Right ventricle myocardium inferior (tissue), 1 donor: ENCODE measurements at regions of chr17 and their contacts with region 1.

Region 1: GRCh38 chr17:78970834-78971773 is 8.6 kb downstream of the LGALS3BP start:
- DNase-seq: peak; percentile 88
- ATAC-seq: peak; percentile 45

Region 2: GRCh38 chr17:78723001-78723796 is 247.9 kb before region 1 on chr17:
- intact Hi-C with region 1: loop called (anchors 10 kb)
- DNase-seq: peak; percentile 71
- ATAC-seq: peak; percentile 65

Region 3: DNA sequence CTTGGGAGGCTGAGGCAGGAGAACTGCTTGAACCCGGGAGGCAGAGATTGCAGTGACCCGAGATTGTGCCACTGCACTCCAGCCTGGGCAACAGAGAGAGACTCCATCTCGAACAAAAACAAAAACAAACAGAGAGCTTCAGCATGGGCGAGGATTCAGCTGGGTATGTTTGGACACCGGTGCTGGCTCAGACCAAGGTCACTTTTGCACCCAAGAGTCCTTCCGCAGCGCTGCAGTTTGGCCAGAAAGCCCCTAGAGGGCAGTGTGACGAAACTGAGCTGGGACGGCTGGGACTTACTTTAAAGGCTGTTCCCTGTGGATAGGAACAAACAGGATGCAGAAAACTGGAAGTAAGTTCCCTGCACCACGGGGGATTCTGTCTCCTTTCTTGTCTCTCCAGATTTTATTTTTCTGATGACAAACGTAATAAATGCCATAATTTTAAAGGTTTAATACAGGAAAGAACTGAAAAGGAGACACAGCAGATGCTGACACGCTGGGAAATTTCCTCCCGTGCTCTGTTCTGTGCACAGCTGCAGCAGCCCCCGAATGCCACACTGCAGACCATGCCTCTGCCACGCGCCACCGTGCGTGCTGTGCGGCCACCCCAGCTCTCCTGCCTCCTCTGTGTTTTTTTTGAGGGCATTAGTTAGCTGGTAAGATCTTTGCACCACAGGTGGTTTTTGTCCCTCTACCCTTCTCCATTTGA is 105.3 kb before region 1 on chr17:
- intact Hi-C with region 1: loop called (anchors 1 kb)
- DNase-seq: peak; percentile 85
- ATAC-seq: peak; percentile 74

Region 4: GRCh38 chr17:79042421-79043190 is 71.5 kb after region 1 on chr17:
- intact Hi-C with region 1: no loop called
- DNase-seq: peak; percentile 84
- ATAC-seq: no peak